Endothelial cell of umbilical vein (primary cell): ENCODE measurements at regions of chr9 and their contacts with region 1.

Region 1: GRCh38 chr9:35910613-35911359 is 1.5 kb downstream of the SPAAR start:
- DNase-seq: peak; percentile 86
- H3K4me3 ChIP-seq: peak overlapping the region in 2 of 3 experiments; percentile 4 to 53
- H3K27ac ChIP-seq: peak overlapping the region; percentile 94
- H3K4me1 ChIP-seq: peaks cover 68% of the 10 kb centered on the region
- H3K27me3 ChIP-seq: no peaks in the 10 kb centered on the region
- CTCF ChIP-seq: peak; percentile 60 to 65
- POLR2A ChIP-seq: peak; percentile 61

Region 2: DNA sequence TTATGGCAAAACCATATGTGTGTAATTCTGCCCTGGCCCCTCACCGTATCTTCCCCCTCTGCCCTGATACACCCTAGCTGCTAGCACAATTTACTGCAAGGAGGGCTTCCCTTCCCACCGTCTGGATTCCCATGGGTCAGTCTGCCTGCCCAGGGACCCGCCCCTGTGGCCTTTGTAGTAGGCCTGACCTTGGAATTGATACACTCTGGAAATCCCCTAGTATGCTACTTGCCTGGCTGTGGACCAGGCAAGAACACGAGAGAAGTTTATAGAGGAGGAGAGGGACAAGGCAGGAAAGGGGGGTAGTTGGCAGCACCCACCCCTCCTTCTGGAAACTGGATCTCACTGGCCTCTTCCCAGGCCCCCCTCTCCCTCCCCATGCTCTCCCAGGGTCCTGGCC is 1085.0 kb before region 1 on chr9:
- CTCF ChIA-PET with region 1: no interaction called
- POLR2A ChIA-PET with region 1: no interaction called
- dilution Hi-C with region 1: no loop called
- intact Hi-C with region 1: no loop called
- DNase-seq: no peak
- H3K4me3 ChIP-seq: no peak overlapping the region
- H3K27ac ChIP-seq: no peak overlapping the region
- H3K4me1 ChIP-seq: no peaks in the 10 kb centered on the region
- H3K27me3 ChIP-seq: peaks cover 8 to 9% of the 10 kb centered on the region in 2 experiments
- CTCF ChIP-seq: no peak
- POLR2A ChIP-seq: no peak

Region 3: DNA sequence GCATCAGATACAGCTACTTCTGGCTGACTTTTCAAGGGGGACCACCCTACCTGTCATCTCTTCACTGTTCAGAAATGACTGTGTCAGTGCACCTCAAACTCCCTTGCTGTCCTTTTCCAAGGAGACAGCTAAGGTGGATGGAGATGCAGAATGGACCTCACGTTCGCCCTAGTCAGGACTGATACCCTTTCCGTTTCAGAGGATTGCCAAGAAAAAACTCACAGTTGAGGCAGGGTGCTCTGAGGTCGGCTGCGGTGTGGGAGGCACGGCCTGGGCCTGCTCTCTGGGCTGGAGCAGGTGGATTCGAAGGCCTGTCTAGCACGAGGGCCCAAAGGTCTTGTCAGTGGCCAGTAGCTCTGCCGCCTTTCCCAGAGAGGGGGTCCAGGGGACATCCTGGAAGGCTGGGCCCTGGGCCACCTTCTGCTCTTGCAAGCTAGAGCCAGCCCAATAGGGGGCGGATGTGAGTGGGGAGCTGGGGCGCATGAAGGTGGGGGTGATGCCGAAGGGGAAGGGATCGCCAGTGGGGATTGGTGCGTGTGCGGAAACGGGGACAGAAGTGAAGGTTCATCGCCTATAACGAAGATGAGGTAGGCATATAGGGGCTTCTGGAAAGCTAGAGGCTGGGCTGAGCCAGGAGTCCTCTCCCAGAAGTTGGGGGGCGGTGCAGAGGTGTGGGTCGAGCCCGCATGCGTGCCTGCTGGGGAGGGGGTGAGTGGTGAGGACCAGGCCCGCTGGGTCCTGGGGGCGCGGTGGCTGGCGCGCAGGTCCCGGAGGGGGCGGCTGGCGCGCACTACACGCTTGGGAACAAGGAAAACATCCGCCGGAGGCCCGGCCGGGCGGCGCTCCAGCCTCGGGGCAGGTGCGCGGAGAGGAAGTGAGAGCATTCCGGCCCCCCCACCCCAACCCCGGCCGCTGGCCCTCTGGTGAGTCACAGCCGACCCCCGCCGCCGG is 154.2 kb before region 1 on chr9:
- CTCF ChIA-PET with region 1: interaction called, 3 read pairs
- POLR2A ChIA-PET with region 1: no interaction called
- dilution Hi-C with region 1: no loop called
- intact Hi-C with region 1: loop called (anchors 2 kb)
- DNase-seq: peak; percentile 84
- H3K4me3 ChIP-seq: peak overlapping the region in 2 of 3 experiments; percentile 8 to 15
- H3K27ac ChIP-seq: peak overlapping the region; percentile 97
- H3K4me1 ChIP-seq: peaks cover 92% of the 10 kb centered on the region
- H3K27me3 ChIP-seq: no peaks in the 10 kb centered on the region
- CTCF ChIP-seq: peak; percentile 45 to 68
- POLR2A ChIP-seq: no peak